H1 (cell line): ENCODE measurements at regions of chr4 and their contacts with region 1.

Region 1: DNA sequence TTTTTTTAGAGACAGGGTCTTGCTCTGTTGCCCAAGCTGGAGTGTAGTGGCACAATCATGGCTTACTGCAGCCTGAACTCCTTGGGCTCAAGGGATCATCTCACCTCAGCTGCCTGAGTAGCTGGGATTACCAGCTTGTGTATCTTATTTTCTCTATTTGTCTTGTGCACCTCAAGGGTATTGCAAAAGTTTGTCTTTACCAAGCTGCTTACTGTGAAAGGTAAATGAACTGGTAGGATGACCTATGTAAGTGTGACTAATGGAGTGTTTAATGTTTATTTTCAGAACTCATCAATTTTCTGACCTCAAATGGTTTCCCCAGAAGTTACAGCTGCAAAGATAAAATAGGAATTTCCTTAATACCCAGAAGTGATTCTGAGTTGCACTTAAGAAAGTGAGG is 5.3 kb upstream of the FGA start:
- DNase-seq: no peak
- H3K4me3 ChIP-seq: no peak overlapping the region
- H3K27ac ChIP-seq: no peak overlapping the region
- H3K4me1 ChIP-seq: no peaks in the 10 kb centered on the region
- H3K27me3 ChIP-seq: no peaks in the 10 kb centered on the region
- CTCF ChIP-seq: no peak
- EP300 ChIP-seq: no peak
- POLR2A ChIP-seq: no peak
- RAD21 ChIP-seq: no peak

Region 2: DNA sequence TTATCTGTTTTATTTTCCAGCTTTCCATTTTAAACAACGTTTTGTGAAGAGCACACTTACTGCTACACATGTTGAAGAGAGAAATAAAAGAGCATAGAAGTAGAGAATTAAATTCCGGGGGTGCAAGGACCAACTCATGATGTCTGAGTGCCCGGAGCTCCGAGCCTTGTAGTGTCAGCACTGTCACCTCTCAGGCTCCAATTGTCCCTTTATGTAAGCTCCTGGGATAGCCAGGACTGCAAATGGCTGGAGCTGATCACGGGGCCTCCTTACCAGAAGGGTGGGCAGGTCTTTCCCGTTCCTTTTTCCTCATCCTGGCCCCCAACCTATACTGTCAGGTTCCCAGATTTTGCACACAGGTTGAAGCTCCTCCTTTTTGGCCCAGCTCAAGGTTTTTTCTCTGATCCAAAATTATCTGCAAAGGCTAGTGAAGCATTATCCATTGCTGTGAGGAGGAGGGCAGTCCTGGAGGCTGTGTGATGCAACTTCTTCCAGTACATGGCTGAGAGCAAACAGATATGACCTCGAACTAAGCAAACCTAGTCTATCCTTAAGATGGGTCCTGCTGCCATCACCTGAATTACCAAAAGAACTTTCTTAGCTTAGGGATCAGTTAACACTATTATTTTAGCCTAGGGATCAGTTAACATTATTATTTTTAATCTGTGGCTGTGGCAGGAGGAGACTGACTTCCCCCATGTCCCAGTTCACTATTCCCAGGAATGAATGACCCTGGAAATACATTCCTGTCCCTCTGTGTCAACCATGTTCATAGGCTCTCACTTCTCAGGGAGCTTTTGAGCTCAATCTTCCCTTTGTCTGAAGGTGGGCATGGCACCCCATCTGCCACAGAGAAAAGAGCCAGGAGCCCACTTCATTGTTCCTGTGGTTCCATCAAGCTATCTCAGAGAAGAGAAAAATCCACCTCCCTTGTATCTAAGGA is 16.9 kb after region 1 on chr4 and contains the start of gene FGG:
- CTCF ChIA-PET with region 1: interaction called, 26 read pairs
- POLR2A ChIA-PET with region 1: interaction called, 3 read pairs
- DNase-seq: no peak
- H3K4me3 ChIP-seq: no peak within 1 kb of the TSS
- H3K27ac ChIP-seq: no peak within 1 kb of the TSS
- H3K4me1 ChIP-seq: no peaks in the 10 kb centered on the region
- H3K27me3 ChIP-seq: peaks cover 0 to 1% (median 0%) of the 10 kb centered on the region in 4 experiments; a peak in 1 of 7 replicates
- CTCF ChIP-seq: no peak
- EP300 ChIP-seq: no peak
- POLR2A ChIP-seq: no peak
- RAD21 ChIP-seq: no peak
- total RNA-seq, gene FGG: not detected in 2 replicates

Region 3: GRCh38 chr4:154707877-154708276 is 112.1 kb after region 1 on chr4:
- CTCF ChIA-PET with region 1: no interaction called
- POLR2A ChIA-PET with region 1: no interaction called
- DNase-seq: no peak
- H3K4me3 ChIP-seq: no peak overlapping the region
- H3K27ac ChIP-seq: no peak overlapping the region
- H3K4me1 ChIP-seq: peaks cover 0 to 5% (median 2%) of the 10 kb centered on the region in 4 experiments; a peak in 2 of 7 replicates
- H3K27me3 ChIP-seq: no peaks in the 10 kb centered on the region
- CTCF ChIP-seq: no peak
- EP300 ChIP-seq: no peak
- POLR2A ChIP-seq: no peak
- RAD21 ChIP-seq: no peak

Region 4: DNA sequence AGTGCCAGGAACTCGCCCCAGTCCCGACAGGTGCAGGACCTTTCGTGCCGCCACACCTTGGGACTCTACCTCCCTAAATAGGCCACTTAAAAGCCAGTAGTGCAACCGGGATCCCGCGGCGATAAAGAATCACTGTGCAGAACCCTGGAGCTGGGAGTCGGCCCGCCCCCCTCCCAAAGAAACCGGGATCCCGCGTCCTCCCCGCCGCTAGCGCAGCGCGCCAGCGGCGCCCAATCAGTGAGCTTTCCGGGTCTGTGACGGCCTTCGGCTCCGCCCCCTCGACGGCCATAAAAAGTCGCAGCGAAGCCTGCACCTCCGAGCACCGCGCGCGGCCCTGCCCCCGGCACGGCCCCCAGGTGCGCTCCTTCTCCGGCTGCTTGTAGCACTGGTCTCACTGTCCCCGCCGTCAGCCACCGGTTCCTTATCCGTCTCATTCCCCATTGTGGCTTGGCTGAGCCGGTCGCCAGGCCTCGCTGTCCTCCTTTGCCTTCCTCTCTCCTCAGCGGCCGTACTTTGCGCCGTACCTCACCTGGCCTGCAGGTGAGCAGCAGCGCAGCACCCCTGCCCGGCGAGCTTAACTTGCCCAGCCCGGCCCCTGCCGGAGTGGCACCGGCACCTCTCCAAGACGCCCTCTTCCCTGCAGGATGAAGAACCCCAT is 148.0 kb after region 1 on chr4 and contains the start of gene LRAT:
- CTCF ChIA-PET with region 1: no interaction called
- POLR2A ChIA-PET with region 1: no interaction called
- DNase-seq: peak; percentile 80 to 91
- H3K4me3 ChIP-seq: peak within 1 kb of the TSS; percentile 70 to 89 (median 82)
- H3K27ac ChIP-seq: peak within 1 kb of the TSS; percentile 26; the same call in 1 of the 2 replicates
- H3K4me1 ChIP-seq: peaks cover 9 to 24% (median 19%) of the 10 kb centered on the region in 4 experiments
- H3K27me3 ChIP-seq: peaks cover 0 to 33% (median 26%) of the 10 kb centered on the region in 4 experiments; a peak in 6 of 7 replicates
- CTCF ChIP-seq: peak; percentile 42 to 69 (median 54)
- EP300 ChIP-seq: no peak
- POLR2A ChIP-seq: peak; percentile 67 to 91
- RAD21 ChIP-seq: peak; percentile 0 to 22; a peak in 2 of 4 replicates
- total RNA-seq, gene LRAT: 10.3 and 10.6 TPM in 2 replicates